K562 (cell line): ENCODE measurements at regions of chr17 and their contacts with region 1.

Region 1: GRCh38 chr17:45895304-45895968 is 1.1 kb downstream of the MAPT start:
- DNase-seq: no peak
- ATAC-seq: no peak
- H3K4me3 ChIP-seq: no peak overlapping the region
- H3K27ac ChIP-seq: no peak overlapping the region
- H3K4me1 ChIP-seq: peaks cover 5 to 38% of the 10 kb centered on the region in 2 experiments; a peak in 3 of 5 replicates
- H3K27me3 ChIP-seq: peaks cover 22 to 57% of the 10 kb centered on the region in 2 experiments; a peak in 4 of 5 replicates
- CTCF ChIP-seq: no peak
- EP300 ChIP-seq: no peak
- POLR2A ChIP-seq: no peak
- RAD21 ChIP-seq: no peak

Region 2: DNA sequence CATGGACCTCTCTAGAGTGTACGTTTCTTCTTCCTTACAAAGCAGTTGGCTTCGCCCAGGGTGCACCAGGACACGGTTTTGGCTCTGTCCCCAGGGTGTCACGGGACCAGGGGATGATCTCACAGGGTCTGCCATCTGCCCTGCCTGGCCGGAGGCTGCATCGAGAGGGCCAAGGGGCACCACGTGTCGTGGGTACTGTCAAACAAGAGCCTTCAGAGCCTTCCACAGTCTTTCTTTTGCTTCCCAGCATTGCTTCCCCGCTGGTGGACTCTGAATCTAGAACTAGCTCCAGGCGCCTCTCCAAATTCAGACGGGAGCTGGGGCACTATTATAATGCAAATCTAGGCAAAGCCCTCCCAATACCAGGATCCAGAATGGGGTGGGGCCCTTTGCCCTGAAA is 46.8 kb after region 1 on chr17:
- CTCF ChIA-PET with region 1: no interaction called
- POLR2A ChIA-PET with region 1: no interaction called
- in situ Hi-C with region 1: no loop called
- intact Hi-C with region 1: loop called (anchors 5 kb)
- DNase-seq: no peak
- ATAC-seq: no peak
- H3K4me3 ChIP-seq: no peak overlapping the region
- H3K27ac ChIP-seq: no peak overlapping the region
- H3K4me1 ChIP-seq: no peaks in the 10 kb centered on the region
- H3K27me3 ChIP-seq: peaks cover 41 to 48% of the 10 kb centered on the region in 2 experiments; a peak in 4 of 5 replicates
- CTCF ChIP-seq: no peak
- EP300 ChIP-seq: no peak
- POLR2A ChIP-seq: no peak
- RAD21 ChIP-seq: no peak